ENCODE measurements at regions of chr5 and their contacts with region 1.

Region 1: GRCh38 chr5:115377468-115378217 is 81.2 kb upstream of the CCDC112 start:
- DNase-seq: no peak
- ATAC-seq: peak; percentile 64

Region 2: GRCh38 chr5:115579747-115580173 is 202.1 kb after region 1 on chr5:
- intact Hi-C with region 1: loop called in 1 of 2 experiments (anchors 10 kb)
- DNase-seq: no peak
- ATAC-seq: no peak